ENCODE measurements at regions of chr7 and their contacts with region 1.

Region 1: GRCh38 chr7:36473454-36474282 is 84.0 kb downstream of the ANLN start:
- DNase-seq: peak in 1 of 2 experiments; percentile 89
- H3K4me3 ChIP-seq: no peak overlapping the region
- H3K27ac ChIP-seq: no peak overlapping the region
- H3K4me1 ChIP-seq: no peaks in the 10 kb centered on the region
- H3K27me3 ChIP-seq: no peaks in the 10 kb centered on the region
- CTCF ChIP-seq: peak; percentile 57 to 77 (median 71)
- EP300 ChIP-seq: no peak
- POLR2A ChIP-seq: no peak
- RAD21 ChIP-seq: peak; percentile 90 to 93

Region 2: GRCh38 chr7:36057323-36057722 is 416.3 kb before region 1 on chr7:
- CTCF ChIA-PET with region 1: no interaction called
- POLR2A ChIA-PET with region 1: no interaction called
- DNase-seq: no peak
- H3K4me3 ChIP-seq: no peak overlapping the region
- H3K27ac ChIP-seq: no peak overlapping the region
- H3K4me1 ChIP-seq: peaks cover 0 to 3% (median 0%) of the 10 kb centered on the region in 4 experiments; a peak in 1 of 7 replicates
- H3K27me3 ChIP-seq: no peaks in the 10 kb centered on the region; a peak in 1 of 7 replicates
- CTCF ChIP-seq: no peak
- EP300 ChIP-seq: no peak
- POLR2A ChIP-seq: no peak
- RAD21 ChIP-seq: no peak

Region 3: GRCh38 chr7:36264123-36264801 is 209.4 kb before region 1 on chr7:
- CTCF ChIA-PET with region 1: no interaction called
- POLR2A ChIA-PET with region 1: no interaction called
- DNase-seq: no peak
- H3K4me3 ChIP-seq: no peak overlapping the region
- H3K27ac ChIP-seq: no peak overlapping the region
- H3K4me1 ChIP-seq: no peaks in the 10 kb centered on the region; a peak in 1 of 7 replicates
- H3K27me3 ChIP-seq: no peaks in the 10 kb centered on the region
- CTCF ChIP-seq: no peak
- EP300 ChIP-seq: no peak
- POLR2A ChIP-seq: no peak
- RAD21 ChIP-seq: no peak

Region 4: GRCh38 chr7:36396150-36396549 is 77.5 kb before region 1 on chr7:
- CTCF ChIA-PET with region 1: no interaction called
- POLR2A ChIA-PET with region 1: no interaction called
- DNase-seq: no peak
- H3K4me3 ChIP-seq: no peak overlapping the region
- H3K27ac ChIP-seq: no peak overlapping the region
- H3K4me1 ChIP-seq: peaks cover 10 to 15% (median 13%) of the 10 kb centered on the region in 4 experiments; a peak in 6 of 7 replicates
- H3K27me3 ChIP-seq: no peaks in the 10 kb centered on the region
- CTCF ChIP-seq: no peak
- EP300 ChIP-seq: no peak
- POLR2A ChIP-seq: no peak
- RAD21 ChIP-seq: no peak

Region 5: DNA sequence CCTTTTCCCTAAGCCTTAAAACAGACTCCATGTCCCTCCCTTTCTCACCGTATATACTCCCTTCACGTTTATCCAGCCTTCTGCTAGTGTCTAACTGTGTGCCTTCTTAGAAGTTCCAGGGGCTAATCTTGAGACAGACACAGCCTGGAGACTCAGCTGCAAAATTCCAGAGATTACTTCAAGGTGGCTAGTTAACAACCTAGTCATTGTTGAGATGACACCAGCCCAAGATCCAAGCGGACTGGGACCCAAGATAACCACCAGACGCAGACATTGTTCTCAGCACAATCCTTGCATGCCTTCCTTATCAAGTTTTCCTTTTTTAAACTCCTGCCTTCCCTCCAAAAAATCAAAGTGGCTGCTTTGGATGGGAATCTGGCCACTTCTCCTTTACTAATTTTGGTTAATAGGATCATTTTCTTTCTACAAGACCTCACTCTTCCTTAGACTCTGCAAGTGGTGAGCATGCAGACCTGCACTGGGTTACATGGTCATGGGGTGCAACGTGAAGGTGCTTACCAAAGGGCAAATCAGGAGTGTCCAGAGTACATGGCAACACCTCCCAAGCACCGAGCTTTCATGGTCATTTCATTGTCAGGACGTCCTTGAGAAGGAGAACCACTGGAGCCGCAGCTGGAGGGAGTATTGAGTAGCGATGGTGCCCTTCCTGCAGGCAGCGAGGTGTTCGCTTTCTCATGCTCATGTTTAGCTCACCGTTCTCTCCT is 14.3 kb before region 1 on chr7:
- CTCF ChIA-PET with region 1: interaction called, 11 read pairs
- POLR2A ChIA-PET with region 1: no interaction called
- DNase-seq: no peak
- H3K4me3 ChIP-seq: no peak overlapping the region
- H3K27ac ChIP-seq: no peak overlapping the region
- H3K4me1 ChIP-seq: no peaks in the 10 kb centered on the region
- H3K27me3 ChIP-seq: no peaks in the 10 kb centered on the region; a peak in 1 of 7 replicates
- CTCF ChIP-seq: no peak
- EP300 ChIP-seq: no peak
- POLR2A ChIP-seq: no peak
- RAD21 ChIP-seq: no peak

Region 6: DNA sequence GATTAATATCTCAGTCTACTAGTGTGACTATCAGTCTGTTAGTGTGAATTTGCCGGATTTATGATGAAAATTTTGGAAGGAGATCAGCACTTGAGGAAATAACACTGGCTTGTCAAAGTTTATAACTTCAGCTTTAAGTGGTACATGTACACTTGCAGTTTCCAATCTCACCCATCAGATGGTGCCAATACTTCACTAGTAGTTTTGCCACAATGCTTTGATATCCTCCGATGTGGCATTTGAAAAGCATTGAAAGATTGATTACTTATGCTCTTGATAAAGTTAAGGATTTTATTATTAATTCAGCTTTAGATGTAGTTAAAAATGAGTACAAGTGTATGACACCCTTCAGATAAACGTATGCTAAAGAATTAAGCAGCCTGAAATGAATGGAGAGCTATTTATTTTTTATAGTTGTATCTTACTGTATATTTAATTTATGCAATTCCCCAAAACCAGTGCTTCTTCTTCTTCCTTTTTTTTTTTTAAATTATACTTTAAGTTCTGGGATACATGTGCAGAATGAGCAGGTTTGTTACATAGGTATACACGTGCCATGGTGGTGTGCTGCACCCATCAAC is 14.2 kb after region 1 on chr7:
- CTCF ChIA-PET with region 1: interaction called, 35 read pairs
- POLR2A ChIA-PET with region 1: no interaction called
- DNase-seq: no peak
- H3K4me3 ChIP-seq: no peak overlapping the region
- H3K27ac ChIP-seq: no peak overlapping the region
- H3K4me1 ChIP-seq: no peaks in the 10 kb centered on the region
- H3K27me3 ChIP-seq: no peaks in the 10 kb centered on the region
- CTCF ChIP-seq: peak in 2 of 3 experiments; percentile 69 to 78; a peak in 3 of 4 replicates
- EP300 ChIP-seq: no peak
- POLR2A ChIP-seq: no peak
- RAD21 ChIP-seq: peak; percentile 96

Region 7: GRCh38 chr7:36613031-36613614 is 139.5 kb after region 1 on chr7:
- CTCF ChIA-PET with region 1: no interaction called
- POLR2A ChIA-PET with region 1: no interaction called
- DNase-seq: no peak
- H3K4me3 ChIP-seq: no peak overlapping the region
- H3K27ac ChIP-seq: no peak overlapping the region
- H3K4me1 ChIP-seq: peaks cover 0 to 6% (median 3%) of the 10 kb centered on the region in 4 experiments; a peak in 4 of 7 replicates
- H3K27me3 ChIP-seq: no peaks in the 10 kb centered on the region
- CTCF ChIP-seq: no peak
- EP300 ChIP-seq: no peak
- POLR2A ChIP-seq: no peak
- RAD21 ChIP-seq: no peak